Uterus (tissue), 4 donors: ENCODE measurements at regions of chr11 and their contacts with region 1.

Region 1: DNA sequence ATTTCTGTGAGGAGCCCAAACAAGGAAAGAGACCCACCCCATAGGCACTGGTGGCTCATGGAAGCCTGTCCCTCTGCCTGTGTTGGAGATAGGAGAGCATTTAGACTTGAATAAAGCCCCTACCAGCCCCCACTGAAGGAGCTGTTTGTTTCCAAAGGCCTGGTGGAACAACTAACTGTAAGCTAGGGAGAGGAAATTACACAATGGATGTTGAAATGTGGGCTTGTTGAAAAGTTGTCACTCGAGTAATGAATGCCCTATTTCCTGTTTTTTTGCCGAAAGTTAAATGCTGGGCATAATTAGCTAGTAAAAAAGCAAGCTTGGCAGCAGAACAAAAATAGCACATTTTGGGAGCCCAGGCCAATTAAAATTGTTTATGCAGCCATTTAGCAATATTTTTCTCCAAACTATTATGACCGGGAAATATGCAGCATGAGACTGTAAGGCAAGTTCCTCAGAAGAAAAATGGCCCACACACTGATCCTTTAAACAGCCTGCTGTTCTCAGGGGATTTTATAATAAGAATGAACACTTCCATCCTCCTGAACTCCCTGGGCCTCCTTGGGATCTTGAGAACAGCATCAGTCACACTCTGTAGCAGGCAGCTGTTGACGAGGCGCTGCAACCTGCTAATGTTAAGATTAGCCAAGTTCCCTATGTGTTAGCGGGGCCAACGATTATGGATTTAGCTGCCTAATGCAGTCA is 38.6 kb upstream of the LMO2 start:
- DNase-seq: peak in 1 of 2 donors; percentile 50
- H3K4me3 ChIP-seq: no peak overlapping the region
- H3K27ac ChIP-seq: peak overlapping the region; percentile 72 to 79
- H3K4me1 ChIP-seq: no peaks in the 10 kb centered on the region
- H3K27me3 ChIP-seq: no peaks in the 10 kb centered on the region
- CTCF ChIP-seq: no peak
- POLR2A ChIP-seq: no peak

Region 2: DNA sequence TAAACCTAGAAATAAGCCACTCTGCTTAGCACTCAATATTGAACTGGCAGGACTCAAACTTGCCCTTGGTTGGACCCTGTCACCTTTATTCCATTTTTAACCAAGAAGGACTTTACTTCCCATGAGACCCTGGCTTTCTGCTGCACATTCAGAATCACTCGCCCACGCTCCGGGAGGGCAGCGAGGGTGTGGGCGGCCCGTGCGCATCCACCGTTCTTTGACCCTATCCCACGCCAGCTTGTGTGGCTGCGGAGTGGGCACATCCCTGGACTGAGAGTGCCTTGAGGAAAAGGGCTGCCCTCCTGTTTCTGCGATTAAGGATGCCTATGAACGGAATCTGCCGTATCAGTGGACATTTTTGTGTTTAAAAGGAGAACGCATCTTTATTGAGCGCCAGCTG is 1771.7 kb after region 1 on chr11:
- intact Hi-C with region 1: loop called (anchors 5 kb)
- DNase-seq: no peak
- H3K4me3 ChIP-seq: no peak overlapping the region
- H3K27ac ChIP-seq: no peak overlapping the region
- H3K4me1 ChIP-seq: no peaks in the 10 kb centered on the region
- H3K27me3 ChIP-seq: no peaks in the 10 kb centered on the region
- CTCF ChIP-seq: no peak
- POLR2A ChIP-seq: no peak